ENCODE measurements at regions of chr18 and their contacts with region 1.

Region 1: DNA sequence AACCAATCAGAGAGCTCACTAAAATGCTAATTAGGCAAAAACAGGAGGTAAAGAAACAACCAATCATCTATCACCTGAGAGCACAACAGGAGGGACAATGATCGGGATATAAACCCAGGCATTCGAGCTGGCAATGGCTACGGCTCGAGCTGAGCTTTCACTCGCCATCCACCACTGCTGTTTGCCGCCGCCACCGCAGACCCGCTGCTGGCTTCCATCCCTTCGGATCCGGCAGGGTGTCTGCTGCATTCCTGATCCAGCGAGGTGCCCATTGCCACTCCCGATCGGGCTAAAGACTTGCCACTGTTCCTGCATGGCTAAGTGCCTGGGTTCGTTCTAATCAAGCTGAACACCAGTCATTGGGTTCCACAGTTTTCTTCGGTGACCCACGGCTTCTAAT is 236.7 kb upstream of the DLGAP1 start:
- DNase-seq: no peak
- ATAC-seq: no peak

Region 2: GRCh38 chr18:4704781-4705180 is 12.9 kb after region 1 on chr18:
- intact Hi-C with region 1: loop called (anchors 1 kb)
- DNase-seq: no peak
- ATAC-seq: no peak

Measured in sciatic nerve (tissue), 2 donors.